ENCODE measurements at regions of chrX and their contacts with region 1.

Region 1: DNA sequence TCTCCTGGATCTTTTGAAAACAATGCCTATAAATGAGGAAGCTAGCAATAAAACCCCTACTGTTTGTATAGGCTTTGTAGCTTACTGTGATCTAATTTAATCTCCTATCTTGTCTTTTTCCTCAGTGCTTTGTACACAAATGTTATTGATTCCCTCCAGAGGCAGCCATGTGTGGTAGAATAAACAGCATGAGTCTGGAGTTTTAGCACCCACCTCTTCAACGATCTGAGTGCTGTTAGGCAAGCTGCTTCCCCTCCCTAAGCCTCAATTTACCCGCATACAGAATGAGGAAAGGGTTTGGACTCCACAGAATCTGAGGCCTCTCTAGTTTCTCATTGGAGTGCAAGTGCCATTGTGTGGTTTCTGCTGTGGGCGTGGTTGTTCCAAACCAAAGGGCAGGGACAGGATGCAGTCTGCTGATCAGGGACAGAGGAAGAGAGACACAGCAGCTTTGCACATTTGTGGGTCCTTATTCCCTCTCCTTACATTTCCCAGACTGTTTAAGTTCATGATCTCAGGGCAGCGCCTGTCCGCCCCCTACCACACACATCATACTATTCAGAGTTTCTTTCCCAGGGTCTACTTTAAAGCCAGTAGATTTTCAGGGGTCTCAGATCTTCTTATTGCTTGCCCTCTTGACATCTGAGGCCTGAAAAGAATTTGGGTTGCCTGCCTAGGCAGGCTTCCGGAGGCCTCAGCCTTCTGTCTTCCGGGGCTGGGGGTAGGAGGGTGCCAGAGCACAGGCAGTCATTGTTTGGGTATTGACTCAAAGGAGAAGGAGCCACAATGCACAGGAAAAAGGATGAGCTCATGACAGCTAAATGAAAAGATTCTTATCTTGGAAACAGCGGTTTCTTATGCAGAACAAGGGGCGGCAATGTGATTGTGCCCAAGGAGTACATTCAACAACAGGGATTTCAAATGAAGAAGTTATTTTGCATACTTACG is 114.9 kb upstream of the TEX13D start:
- DNase-seq: peak; percentile 69
- H3K4me3 Mint-ChIP-seq: peak overlapping the region; percentile 72
- H3K27ac Mint-ChIP-seq: peak overlapping the region; percentile 96
- H3K4me1 Mint-ChIP-seq: peaks cover 80% of the 10 kb centered on the region
- H3K27me3 Mint-ChIP-seq: no peaks in the 10 kb centered on the region

Region 2: GRCh38 chrX:124232523-124233201 is 15.1 kb after region 1 on chrX:
- intact Hi-C with region 1: loop called (anchors 1 kb)
- DNase-seq: no peak
- H3K4me3 Mint-ChIP-seq: no peak overlapping the region
- H3K27ac Mint-ChIP-seq: no peak overlapping the region
- H3K4me1 Mint-ChIP-seq: peaks cover 15% of the 10 kb centered on the region
- H3K27me3 Mint-ChIP-seq: no peaks in the 10 kb centered on the region

Region 3: DNA sequence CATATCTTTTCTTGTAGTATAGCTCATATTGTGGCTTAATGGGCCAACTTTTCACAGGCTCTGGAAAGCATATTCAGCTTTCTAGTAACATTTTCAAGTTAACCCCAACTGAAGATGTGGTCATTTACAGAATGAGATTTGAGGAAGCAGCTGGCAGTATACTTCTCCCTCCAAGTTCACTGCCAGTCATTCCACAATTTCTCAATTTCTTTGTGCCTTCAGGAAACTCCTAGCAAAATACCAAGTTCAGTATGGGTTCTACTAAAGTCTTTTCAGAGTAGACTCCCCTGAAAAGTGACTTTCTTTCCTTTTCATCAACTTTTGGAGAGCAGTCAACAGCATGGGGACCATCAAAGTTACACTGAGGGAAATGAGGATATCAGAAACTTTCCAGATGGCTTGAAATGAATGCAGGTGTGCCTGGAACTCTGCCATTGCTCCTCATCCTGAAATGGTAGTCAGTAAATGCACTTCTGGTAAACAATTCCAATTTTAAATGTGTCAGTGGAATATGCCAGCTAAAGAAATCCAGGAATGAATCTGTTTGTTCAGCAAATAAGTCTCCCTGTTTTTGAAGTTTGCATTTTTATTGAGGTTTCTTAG is 33.4 kb after region 1 on chrX:
- intact Hi-C with region 1: no loop called
- DNase-seq: no peak
- H3K4me3 Mint-ChIP-seq: no peak overlapping the region
- H3K27ac Mint-ChIP-seq: no peak overlapping the region
- H3K4me1 Mint-ChIP-seq: peaks cover 5% of the 10 kb centered on the region
- H3K27me3 Mint-ChIP-seq: no peaks in the 10 kb centered on the region

Region 4: GRCh38 chrX:124280294-124280902 is 62.8 kb after region 1 on chrX:
- intact Hi-C with region 1: loop called (anchors 5 kb)
- DNase-seq: no peak
- H3K4me3 Mint-ChIP-seq: no peak overlapping the region
- H3K27ac Mint-ChIP-seq: peak overlapping the region; percentile 87
- H3K4me1 Mint-ChIP-seq: peaks cover 19% of the 10 kb centered on the region
- H3K27me3 Mint-ChIP-seq: no peaks in the 10 kb centered on the region

Region 5: GRCh38 chrX:124346117-124346876 is 128.7 kb after region 1 on chrX and contains the start of gene SH2D1A:
- intact Hi-C with region 1: loop called (anchors 1 kb)
- DNase-seq: peak; percentile 24
- H3K4me3 Mint-ChIP-seq: peak within 1 kb of the TSS; percentile 94
- H3K27ac Mint-ChIP-seq: peak within 1 kb of the TSS; percentile 99
- H3K4me1 Mint-ChIP-seq: peaks cover 45% of the 10 kb centered on the region
- H3K27me3 Mint-ChIP-seq: no peaks in the 10 kb centered on the region
- total RNA-seq, gene SH2D1A: 54.9 and 57.7 TPM in 2 replicates

Region 6: GRCh38 chrX:124388562-124388961 is 171.0 kb after region 1 on chrX:
- intact Hi-C with region 1: loop called (anchors 5 kb)
- DNase-seq: peak; percentile 13
- H3K4me3 Mint-ChIP-seq: no peak overlapping the region
- H3K27ac Mint-ChIP-seq: no peak overlapping the region
- H3K4me1 Mint-ChIP-seq: peaks cover 38% of the 10 kb centered on the region
- H3K27me3 Mint-ChIP-seq: no peaks in the 10 kb centered on the region